Heart right ventricle (tissue), 16 donors: ENCODE measurements at regions of chr1 and their contacts with region 1.

Region 1: GRCh38 chr1:43300378-43301094 is at the start of gene TIE1:
- DNase-seq: peak; percentile 52 to 80
- ATAC-seq: peak; percentile 68 to 89 (median 83)
- H3K4me3 ChIP-seq: peak within 1 kb of the TSS; percentile 32 to 63 (median 50)
- H3K27ac ChIP-seq: peak within 1 kb of the TSS; percentile 71 to 94 (median 84)
- H3K4me1 ChIP-seq: peaks cover 7 to 79% (median 40%) of the 10 kb centered on the region in 9 donors
- H3K27me3 ChIP-seq: no peaks in the 10 kb centered on the region
- CTCF ChIP-seq: no peak
- total RNA-seq, gene TIE1: 19.9 to 55.8 (median 28.4) TPM

Region 2: GRCh38 chr1:43082740-43083139 is 217.8 kb before region 1 on chr1:
- intact Hi-C with region 1: no loop called
- DNase-seq: no peak
- ATAC-seq: no peak
- H3K4me3 ChIP-seq: no peak overlapping the region
- H3K27ac ChIP-seq: no peak overlapping the region
- H3K4me1 ChIP-seq: no peaks in the 10 kb centered on the region
- H3K27me3 ChIP-seq: no peaks in the 10 kb centered on the region
- CTCF ChIP-seq: no peak

Region 3: GRCh38 chr1:43348809-43349583 is 48.5 kb after region 1 on chr1:
- intact Hi-C with region 1: loop called in 3 of 10 experiments (anchors 5 kb)
- DNase-seq: peak; percentile 87
- ATAC-seq: peak; percentile 84 to 95 (median 90)
- H3K4me3 ChIP-seq: peak overlapping the region; percentile 8 to 67 (median 59)
- H3K27ac ChIP-seq: peak overlapping the region; percentile 85 to 98 (median 91)
- H3K4me1 ChIP-seq: peaks cover 4 to 57% (median 22%) of the 10 kb centered on the region in 9 donors
- H3K27me3 ChIP-seq: no peaks in the 10 kb centered on the region
- CTCF ChIP-seq: peak in 1 of 9 donors; percentile 11

Region 4: GRCh38 chr1:43358746-43359693 is 58.5 kb after region 1 on chr1 and contains the start of gene CDC20:
- intact Hi-C with region 1: loop called in 1 of 10 experiments (anchors 5 kb)
- DNase-seq: peak; percentile 99
- ATAC-seq: peak; percentile 98 to 99 (median 99)
- H3K4me3 ChIP-seq: peak within 1 kb of the TSS; percentile 2 to 83 (median 72)
- H3K27ac ChIP-seq: peak within 1 kb of the TSS; percentile 72 to 97 (median 94)
- H3K4me1 ChIP-seq: peaks cover 2 to 41% (median 13%) of the 10 kb centered on the region in 9 donors
- H3K27me3 ChIP-seq: no peaks in the 10 kb centered on the region
- CTCF ChIP-seq: no peak
- total RNA-seq, gene CDC20: 0.15 to 9.6 (median 1.5) TPM

Region 5: GRCh38 chr1:43367904-43368645 is 67.5 kb after region 1 on chr1 and contains the start of gene ELOVL1:
- intact Hi-C with region 1: loop called in 1 of 10 experiments (anchors 5 kb)
- DNase-seq: peak; percentile 94 to 95
- ATAC-seq: peak; percentile 94 to 97 (median 95)
- H3K4me3 ChIP-seq: peak within 1 kb of the TSS; percentile 64 to 96 (median 88)
- H3K27ac ChIP-seq: peak within 1 kb of the TSS; percentile 89 to 99 (median 98)
- H3K4me1 ChIP-seq: peaks cover 18 to 50% (median 32%) of the 10 kb centered on the region in 9 donors
- H3K27me3 ChIP-seq: no peaks in the 10 kb centered on the region
- CTCF ChIP-seq: peak in 5 of 9 donors; percentile 12 to 60 (median 48)
- total RNA-seq, gene ELOVL1: 18.4 to 49.3 (median 28.3) TPM